ENCODE measurements at regions of chr2 and their contacts with region 1.

Region 1: GRCh38 chr2:113203901-113204519 is 30.2 kb downstream of the PSD4 start:
- DNase-seq: no peak
- H3K4me3 ChIP-seq: no peak overlapping the region
- CTCF ChIP-seq: peak; percentile 93

Region 2: GRCh38 chr2:113138428-113139322 is 65.3 kb before region 1 on chr2:
- in situ Hi-C with region 1: loop called (anchors 5 kb)
- DNase-seq: peak; percentile 66
- H3K4me3 ChIP-seq: no peak overlapping the region
- CTCF ChIP-seq: peak; percentile 78

Region 3: GRCh38 chr2:113240150-113240862 is 36.3 kb after region 1 on chr2:
- in situ Hi-C with region 1: no loop called
- DNase-seq: peak; percentile 84
- H3K4me3 ChIP-seq: no peak overlapping the region
- CTCF ChIP-seq: no peak

Region 4: GRCh38 chr2:113739849-113740248 is 535.8 kb after region 1 on chr2:
- in situ Hi-C with region 1: no loop called
- DNase-seq: no peak
- H3K4me3 ChIP-seq: no peak overlapping the region
- CTCF ChIP-seq: no peak